ENCODE measurements at regions of chr2 and their contacts with region 1.

Region 1: DNA sequence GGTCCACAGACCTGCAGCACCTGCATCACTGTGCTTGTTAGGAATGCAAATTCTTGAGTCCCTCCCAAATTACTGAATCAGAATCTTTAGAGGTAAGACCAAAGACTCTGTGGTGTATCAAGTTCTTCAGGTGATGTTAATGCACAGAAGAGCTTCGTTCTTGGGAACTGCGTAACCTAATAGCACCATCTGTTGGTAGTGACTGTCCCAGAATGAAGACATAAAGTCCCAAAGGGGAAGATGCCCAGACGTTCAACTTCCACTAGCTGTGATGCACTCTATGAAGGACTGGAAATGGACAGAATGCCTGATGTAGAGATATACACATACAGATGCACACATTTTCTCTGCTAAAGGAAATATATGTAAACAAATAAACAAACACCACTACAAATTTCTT is 576.0 kb downstream of the LRP1B start:
- DNase-seq: peak; percentile 32 to 44
- H3K4me3 ChIP-seq: no peak overlapping the region
- H3K4me3 Mint-ChIP-seq: no peak overlapping the region
- H3K27ac Mint-ChIP-seq: no peak overlapping the region
- H3K4me1 ChIP-seq: no peaks in the 10 kb centered on the region
- H3K4me1 Mint-ChIP-seq: no peaks in the 10 kb centered on the region
- H3K27me3 ChIP-seq: no peaks in the 10 kb centered on the region
- H3K27me3 Mint-ChIP-seq: no peaks in the 10 kb centered on the region
- CTCF ChIP-seq: peak; percentile 59 to 62

Region 2: GRCh38 chr2:141311430-141311829 is 243.4 kb before region 1 on chr2:
- CTCF ChIA-PET with region 1: no interaction called
- POLR2A ChIA-PET with region 1: no interaction called
- intact Hi-C with region 1: loop called (anchors 2 kb)
- DNase-seq: no peak
- H3K4me3 ChIP-seq: no peak overlapping the region
- H3K4me3 Mint-ChIP-seq: no peak overlapping the region
- H3K27ac Mint-ChIP-seq: no peak overlapping the region
- H3K4me1 ChIP-seq: no peaks in the 10 kb centered on the region
- H3K4me1 Mint-ChIP-seq: no peaks in the 10 kb centered on the region
- H3K27me3 ChIP-seq: no peaks in the 10 kb centered on the region
- H3K27me3 Mint-ChIP-seq: peaks cover 5% of the 10 kb centered on the region
- CTCF ChIP-seq: no peak

Region 3: GRCh38 chr2:141513853-141514252 is 41.0 kb before region 1 on chr2:
- CTCF ChIA-PET with region 1: no interaction called
- POLR2A ChIA-PET with region 1: no interaction called
- intact Hi-C with region 1: no loop called
- DNase-seq: no peak
- H3K4me3 ChIP-seq: no peak overlapping the region
- H3K4me3 Mint-ChIP-seq: no peak overlapping the region
- H3K27ac Mint-ChIP-seq: no peak overlapping the region
- H3K4me1 ChIP-seq: peaks cover 9% of the 10 kb centered on the region; the same call in 1 of the 2 replicates
- H3K4me1 Mint-ChIP-seq: peaks cover 15% of the 10 kb centered on the region
- H3K27me3 ChIP-seq: no peaks in the 10 kb centered on the region
- H3K27me3 Mint-ChIP-seq: no peaks in the 10 kb centered on the region
- CTCF ChIP-seq: no peak

Region 4: GRCh38 chr2:142130111-142131009 is 575.5 kb after region 1 on chr2:
- CTCF ChIA-PET with region 1: no interaction called
- POLR2A ChIA-PET with region 1: no interaction called
- intact Hi-C with region 1: loop called (anchors 5 kb)
- DNase-seq: peak; percentile 22 to 36
- H3K4me3 ChIP-seq: peak overlapping the region; percentile 33
- H3K4me3 Mint-ChIP-seq: peak overlapping the region; percentile 69
- H3K27ac Mint-ChIP-seq: no peak overlapping the region
- H3K4me1 ChIP-seq: no peaks in the 10 kb centered on the region
- H3K4me1 Mint-ChIP-seq: no peaks in the 10 kb centered on the region
- H3K27me3 ChIP-seq: no peaks in the 10 kb centered on the region; the same call in none of the 2 replicates
- H3K27me3 Mint-ChIP-seq: peaks cover 46% of the 10 kb centered on the region
- CTCF ChIP-seq: no peak

Measured in Caco-2 (cell line).